ENCODE measurements at regions of chr21 and their contacts with region 1.

Region 1: DNA sequence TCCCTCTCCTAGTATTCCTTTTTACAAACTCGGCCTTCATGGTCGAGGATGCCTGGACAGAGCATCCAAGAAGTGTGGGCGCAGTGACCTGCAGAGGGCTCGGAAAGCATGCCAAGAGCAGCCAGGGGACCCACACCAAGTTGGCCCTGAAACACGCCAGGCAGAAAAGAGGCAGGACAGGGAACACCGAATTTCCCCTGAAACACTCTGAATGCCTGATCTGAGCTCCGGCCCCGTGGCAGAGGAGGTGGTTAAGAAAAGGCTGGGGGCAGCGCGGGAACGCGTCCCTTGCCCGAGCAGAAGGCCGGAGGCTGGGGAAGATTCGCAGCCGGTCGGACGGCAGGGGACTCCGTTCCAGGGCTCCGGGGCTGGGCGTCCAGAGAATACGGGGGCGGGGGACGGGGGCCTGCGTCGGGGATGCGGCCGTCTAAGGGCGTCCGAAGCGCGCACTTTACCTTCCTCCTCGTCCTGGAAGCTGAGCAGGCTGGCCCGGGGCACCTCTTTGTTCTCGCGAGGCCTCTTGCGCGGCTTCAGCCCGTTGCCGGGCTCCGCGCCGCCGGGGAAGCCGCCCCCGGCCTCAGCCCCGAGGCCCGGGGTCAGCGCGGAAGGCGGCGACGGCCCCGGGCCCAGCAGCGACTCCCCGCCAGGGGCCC is 558 bp downstream of the PAXBP1 start:
- DNase-seq: peak in 9 of 14 experiments; percentile 1 to 56 (median 33)
- ATAC-seq: peak; percentile 15
- H3K4me3 ChIP-seq: peak overlapping the region; percentile 84
- H3K4me3 Mint-ChIP-seq: peak overlapping the region; percentile 97
- H3K27ac ChIP-seq: peak overlapping the region in 1 of 2 donors; percentile 82
- H3K27ac Mint-ChIP-seq: peak overlapping the region; percentile 93
- H3K4me1 ChIP-seq: peaks cover 30% of the 10 kb centered on the region
- H3K4me1 Mint-ChIP-seq: peaks cover 68% of the 10 kb centered on the region
- H3K27me3 ChIP-seq: no peaks in the 10 kb centered on the region
- H3K27me3 Mint-ChIP-seq: peaks cover 8% of the 10 kb centered on the region
- CTCF ChIP-seq: no peak

Region 2: GRCh38 chr21:32403201-32403777 is 367.7 kb before region 1 on chr21:
- CTCF ChIA-PET with region 1: no interaction called
- POLR2A ChIA-PET with region 1: no interaction called
- intact Hi-C with region 1: no loop called
- DNase-seq: peak in 13 of 14 experiments; percentile 12 to 80 (median 42)
- ATAC-seq: peak; percentile 83
- H3K4me3 ChIP-seq: no peak overlapping the region
- H3K4me3 Mint-ChIP-seq: no peak overlapping the region
- H3K27ac ChIP-seq: no peak overlapping the region
- H3K27ac Mint-ChIP-seq: no peak overlapping the region
- H3K4me1 ChIP-seq: peaks cover 5% of the 10 kb centered on the region
- H3K4me1 Mint-ChIP-seq: peaks cover 9% of the 10 kb centered on the region
- H3K27me3 ChIP-seq: no peaks in the 10 kb centered on the region
- H3K27me3 Mint-ChIP-seq: peaks cover 2% of the 10 kb centered on the region
- CTCF ChIP-seq: peak; percentile 67

Region 3: DNA sequence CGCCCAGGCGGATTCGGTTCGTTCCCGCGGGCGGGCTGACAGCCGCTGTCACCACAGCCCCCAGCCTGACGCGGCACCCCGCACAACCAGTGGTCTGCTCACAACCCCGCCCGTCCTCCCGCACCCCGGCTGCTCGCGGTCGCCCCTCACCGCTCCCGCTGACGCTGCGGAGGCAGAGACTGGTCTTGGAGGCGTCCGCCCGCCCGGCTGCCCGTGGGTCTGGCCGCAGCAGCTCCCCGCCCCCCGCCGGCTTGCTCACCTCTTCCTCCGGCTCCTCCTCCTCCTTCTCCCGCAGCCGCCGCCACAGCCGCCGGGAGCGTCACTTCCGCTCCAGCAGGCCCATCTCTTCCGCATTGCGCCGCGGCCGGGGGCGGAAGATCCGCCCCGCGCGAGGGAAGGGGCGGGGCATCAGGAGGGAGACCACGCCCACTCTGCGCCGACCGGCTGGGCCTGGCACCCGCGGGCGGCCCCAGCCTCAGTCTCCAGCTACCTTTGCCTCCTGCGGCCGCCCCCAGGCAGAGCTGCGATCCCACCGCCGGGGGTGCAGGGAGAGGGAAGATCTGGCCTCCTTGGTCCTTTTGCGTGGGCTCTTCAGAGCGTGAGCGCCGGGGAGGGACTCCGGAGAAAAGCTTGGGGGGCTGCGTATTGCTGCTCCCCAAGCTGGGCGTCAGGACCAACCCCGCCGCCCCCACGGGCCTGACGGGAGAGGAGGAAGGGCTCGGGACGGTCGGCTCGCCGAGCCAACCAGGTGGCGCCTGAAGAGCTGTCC is 43.1 kb before region 1 on chr21 and contains the start of gene SYNJ1:
- CTCF ChIA-PET with region 1: interaction called, 11 read pairs
- POLR2A ChIA-PET with region 1: interaction called, 60 read pairs
- intact Hi-C with region 1: loop called (anchors 1 to 5 kb)
- DNase-seq: peak; percentile 85 to 97 (median 92)
- ATAC-seq: peak; percentile 85
- H3K4me3 ChIP-seq: peak within 1 kb of the TSS; percentile 95
- H3K4me3 Mint-ChIP-seq: peak within 1 kb of the TSS; percentile 97
- H3K27ac ChIP-seq: peak within 1 kb of the TSS; percentile 72 to 81
- H3K27ac Mint-ChIP-seq: peak within 1 kb of the TSS; percentile 90
- H3K4me1 ChIP-seq: peaks cover 27% of the 10 kb centered on the region
- H3K4me1 Mint-ChIP-seq: peaks cover 75% of the 10 kb centered on the region
- H3K27me3 ChIP-seq: no peaks in the 10 kb centered on the region
- H3K27me3 Mint-ChIP-seq: no peaks in the 10 kb centered on the region
- CTCF ChIP-seq: no peak
- total RNA-seq, gene SYNJ1: 14.3 to 15.6 TPM

Region 4: DNA sequence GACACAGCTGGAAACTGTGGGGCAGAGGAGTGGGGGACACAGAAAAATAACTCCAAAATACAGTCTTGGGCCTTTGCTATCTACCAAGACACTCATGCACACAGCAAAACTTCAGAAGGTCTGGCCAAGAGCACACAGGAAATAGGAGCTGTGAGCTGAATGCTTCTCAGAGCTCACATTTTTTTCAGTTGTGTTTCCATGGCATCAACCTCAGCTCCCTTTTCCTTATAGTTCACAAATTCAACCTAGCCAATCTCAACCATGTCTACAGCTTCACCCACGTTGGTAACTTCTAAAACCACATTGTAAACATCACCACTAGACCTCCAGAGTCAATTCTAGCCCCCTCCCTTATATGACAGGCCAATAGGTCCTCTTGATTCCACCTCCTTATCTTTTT is 23.6 kb before region 1 on chr21:
- CTCF ChIA-PET with region 1: interaction called, 6 read pairs
- POLR2A ChIA-PET with region 1: interaction called, 36 read pairs
- intact Hi-C with region 1: no loop called
- DNase-seq: peak in 1 of 14 experiments; percentile 14
- ATAC-seq: peak; percentile 24
- H3K4me3 ChIP-seq: no peak overlapping the region
- H3K4me3 Mint-ChIP-seq: no peak overlapping the region
- H3K27ac ChIP-seq: peak overlapping the region in 1 of 2 donors; percentile 30
- H3K27ac Mint-ChIP-seq: peak overlapping the region; percentile 62
- H3K4me1 ChIP-seq: peaks cover 7% of the 10 kb centered on the region
- H3K4me1 Mint-ChIP-seq: peaks cover 26% of the 10 kb centered on the region
- H3K27me3 ChIP-seq: no peaks in the 10 kb centered on the region
- H3K27me3 Mint-ChIP-seq: no peaks in the 10 kb centered on the region
- CTCF ChIP-seq: no peak

Region 5: GRCh38 chr21:32753818-32754610 is 17.0 kb before region 1 on chr21:
- CTCF ChIA-PET with region 1: interaction called, 6 read pairs
- POLR2A ChIA-PET with region 1: interaction called, 36 read pairs
- intact Hi-C with region 1: no loop called
- DNase-seq: no peak
- ATAC-seq: no peak
- H3K4me3 ChIP-seq: no peak overlapping the region
- H3K4me3 Mint-ChIP-seq: no peak overlapping the region
- H3K27ac ChIP-seq: no peak overlapping the region
- H3K27ac Mint-ChIP-seq: no peak overlapping the region
- H3K4me1 ChIP-seq: no peaks in the 10 kb centered on the region
- H3K4me1 Mint-ChIP-seq: peaks cover 8% of the 10 kb centered on the region
- H3K27me3 ChIP-seq: no peaks in the 10 kb centered on the region
- H3K27me3 Mint-ChIP-seq: no peaks in the 10 kb centered on the region
- CTCF ChIP-seq: no peak

Region 6: GRCh38 chr21:32826329-32827167 is 55.6 kb after region 1 on chr21:
- CTCF ChIA-PET with region 1: interaction called, 3 read pairs
- POLR2A ChIA-PET with region 1: interaction called, 6 read pairs
- intact Hi-C with region 1: loop called (anchors 5 to 10 kb)
- DNase-seq: peak in 9 of 14 experiments; percentile 3 to 66 (median 10)
- ATAC-seq: peak; percentile 74
- H3K4me3 ChIP-seq: no peak overlapping the region
- H3K4me3 Mint-ChIP-seq: no peak overlapping the region
- H3K27ac ChIP-seq: no peak overlapping the region
- H3K27ac Mint-ChIP-seq: no peak overlapping the region
- H3K4me1 ChIP-seq: no peaks in the 10 kb centered on the region
- H3K4me1 Mint-ChIP-seq: no peaks in the 10 kb centered on the region
- H3K27me3 ChIP-seq: no peaks in the 10 kb centered on the region
- H3K27me3 Mint-ChIP-seq: peaks cover 8% of the 10 kb centered on the region
- CTCF ChIP-seq: peak; percentile 65

Region 7: DNA sequence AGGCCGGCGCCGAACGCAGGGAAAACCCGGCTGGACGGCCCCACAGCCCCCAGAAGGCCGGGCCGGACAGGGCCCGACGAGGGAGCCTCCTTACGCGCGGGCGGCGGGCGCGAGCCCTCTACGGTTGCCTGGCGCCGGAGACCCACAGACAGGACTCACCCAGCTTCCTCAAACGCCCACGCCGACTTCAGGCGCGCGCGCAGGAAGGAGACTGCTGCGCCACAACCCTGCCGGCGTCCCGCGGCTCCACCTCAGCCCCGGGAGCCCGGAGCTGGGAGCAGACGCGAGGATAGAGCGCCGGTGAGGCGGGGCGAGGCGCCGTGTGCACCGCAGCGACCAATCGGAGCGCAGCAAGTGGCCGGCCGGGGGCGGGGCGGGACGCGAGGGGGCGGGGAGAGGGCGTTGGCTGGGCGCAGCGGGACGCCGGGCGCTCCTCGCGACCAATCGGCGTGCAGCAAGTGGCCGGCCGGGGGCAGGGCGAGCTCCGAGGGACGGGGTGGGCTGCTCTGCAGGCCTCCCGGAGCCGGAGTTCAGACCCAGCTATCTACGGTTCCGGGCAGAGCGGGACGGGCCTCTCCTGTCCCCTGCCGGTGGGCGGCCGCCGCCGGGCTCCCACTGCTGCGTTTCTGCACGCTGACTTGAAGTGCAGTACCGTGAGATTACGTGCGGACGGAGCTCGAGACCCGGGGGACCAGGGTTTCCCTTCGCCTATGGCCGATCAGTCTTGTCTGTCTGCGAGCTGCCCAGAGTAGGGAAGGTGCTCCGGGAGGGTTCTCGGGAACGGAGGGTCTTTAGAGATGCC is 708.9 kb after region 1 on chr21 and contains the start of gene TMEM50B:
- CTCF ChIA-PET with region 1: no interaction called
- POLR2A ChIA-PET with region 1: interaction called, 25 read pairs
- intact Hi-C with region 1: loop called in 1 of 2 experiments (anchors 5 kb)
- DNase-seq: peak; percentile 91 to 99 (median 96)
- ATAC-seq: peak; percentile 89
- H3K4me3 ChIP-seq: peak within 1 kb of the TSS; percentile 88
- H3K4me3 Mint-ChIP-seq: peak within 1 kb of the TSS; percentile 89
- H3K27ac ChIP-seq: peak within 1 kb of the TSS; percentile 80 to 90
- H3K27ac Mint-ChIP-seq: peak within 1 kb of the TSS; percentile 96
- H3K4me1 ChIP-seq: peaks cover 22% of the 10 kb centered on the region
- H3K4me1 Mint-ChIP-seq: peaks cover 19% of the 10 kb centered on the region
- H3K27me3 ChIP-seq: no peaks in the 10 kb centered on the region
- H3K27me3 Mint-ChIP-seq: no peaks in the 10 kb centered on the region
- CTCF ChIP-seq: peak; percentile 0
- total RNA-seq, gene TMEM50B: 38.4 to 40.3 TPM